ENCODE measurements at regions of chr17 and their contacts with region 1.

Region 1: GRCh38 chr17:52106638-52107261 is 51.8 kb downstream of the CA10 start:
- DNase-seq: no peak
- H3K4me3 ChIP-seq: no peak overlapping the region
- H3K27ac ChIP-seq: no peak overlapping the region
- H3K4me1 ChIP-seq: no peaks in the 10 kb centered on the region
- H3K27me3 ChIP-seq: no peaks in the 10 kb centered on the region
- CTCF ChIP-seq: peak; percentile 19 to 38 (median 38)

Region 2: GRCh38 chr17:51764387-51764972 is 342.3 kb before region 1 on chr17:
- intact Hi-C with region 1: loop called (anchors 10 kb)
- DNase-seq: no peak
- H3K4me3 ChIP-seq: no peak overlapping the region
- H3K27ac ChIP-seq: no peak overlapping the region
- H3K4me1 ChIP-seq: no peaks in the 10 kb centered on the region
- H3K27me3 ChIP-seq: no peaks in the 10 kb centered on the region
- CTCF ChIP-seq: peak; percentile 32 to 74 (median 56)

Region 3: GRCh38 chr17:51941247-51941646 is 165.5 kb before region 1 on chr17:
- intact Hi-C with region 1: no loop called
- DNase-seq: no peak
- H3K4me3 ChIP-seq: no peak overlapping the region
- H3K27ac ChIP-seq: no peak overlapping the region
- H3K4me1 ChIP-seq: no peaks in the 10 kb centered on the region
- H3K27me3 ChIP-seq: no peaks in the 10 kb centered on the region
- CTCF ChIP-seq: no peak

Region 4: GRCh38 chr17:52159246-52160135 is 52.7 kb after region 1 on chr17:
- intact Hi-C with region 1: loop called (anchors 10 kb)
- DNase-seq: no peak
- H3K4me3 ChIP-seq: no peak overlapping the region
- H3K27ac ChIP-seq: no peak overlapping the region
- H3K4me1 ChIP-seq: no peaks in the 10 kb centered on the region
- H3K27me3 ChIP-seq: no peaks in the 10 kb centered on the region
- CTCF ChIP-seq: no peak

Measured in ascending aorta (tissue), 2 donors.